Right cardiac atrium (tissue), 5 donors: ENCODE measurements at regions of chr17 and their contacts with region 1.

Region 1: GRCh38 chr17:58631523-58632323 is 60.1 kb downstream of the TEX14 start:
- DNase-seq: peak; percentile 94 to 97 (median 96)
- ATAC-seq: peak; percentile 98
- H3K4me3 ChIP-seq: peak overlapping the region; percentile 81
- H3K27ac ChIP-seq: peak overlapping the region; percentile 95
- H3K4me1 ChIP-seq: peaks cover 3% of the 10 kb centered on the region
- H3K27me3 ChIP-seq: no peaks in the 10 kb centered on the region

Region 2: DNA sequence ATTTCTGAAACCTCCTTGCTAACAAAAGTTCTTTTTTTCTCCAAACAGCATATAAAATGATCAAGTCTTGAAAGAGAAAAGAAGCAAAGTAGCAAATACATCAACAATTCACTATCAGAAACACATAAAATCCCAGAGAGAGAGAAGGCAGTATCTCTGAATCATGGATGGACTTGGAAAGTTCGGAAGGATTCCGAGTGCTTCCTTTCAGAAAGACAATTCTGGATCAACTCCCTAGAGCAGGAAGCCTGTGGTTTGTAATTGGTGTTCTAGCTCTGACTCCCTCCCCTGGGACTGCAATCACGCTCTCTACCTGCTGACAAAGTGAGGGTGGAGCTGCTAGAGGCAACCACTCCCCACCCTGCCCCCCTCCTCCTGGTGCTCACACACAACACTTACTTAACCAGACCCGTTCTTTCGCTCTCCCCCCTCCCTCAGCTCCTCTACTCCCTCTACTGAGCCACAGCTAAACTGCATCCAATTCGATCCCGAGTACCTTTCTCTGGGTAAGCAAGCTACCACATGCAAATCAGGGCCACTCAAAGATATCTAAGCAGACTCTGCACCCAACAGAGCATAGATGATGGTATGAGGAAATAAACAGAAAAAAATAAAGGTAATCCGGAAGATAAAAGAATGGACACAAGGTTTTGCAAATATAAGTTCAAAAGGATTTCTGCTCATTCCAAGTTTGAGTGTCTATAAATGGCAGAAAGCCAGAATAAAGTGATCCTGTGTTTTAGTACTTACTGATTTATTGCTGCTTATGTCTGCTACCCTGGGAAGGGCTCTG is 214.2 kb before region 1 on chr17 and contains the start of gene RNF43:
- intact Hi-C with region 1: no loop called
- DNase-seq: peak; percentile 80 to 92 (median 88)
- ATAC-seq: peak; percentile 99 to 100
- H3K4me3 ChIP-seq: peak within 1 kb of the TSS; percentile 36
- H3K27ac ChIP-seq: peak within 1 kb of the TSS; percentile 24
- H3K4me1 ChIP-seq: no peaks in the 10 kb centered on the region
- H3K27me3 ChIP-seq: no peaks in the 10 kb centered on the region
- total RNA-seq, gene RNF43: 2.0 to 8.1 (median 4.3) TPM

Region 3: DNA sequence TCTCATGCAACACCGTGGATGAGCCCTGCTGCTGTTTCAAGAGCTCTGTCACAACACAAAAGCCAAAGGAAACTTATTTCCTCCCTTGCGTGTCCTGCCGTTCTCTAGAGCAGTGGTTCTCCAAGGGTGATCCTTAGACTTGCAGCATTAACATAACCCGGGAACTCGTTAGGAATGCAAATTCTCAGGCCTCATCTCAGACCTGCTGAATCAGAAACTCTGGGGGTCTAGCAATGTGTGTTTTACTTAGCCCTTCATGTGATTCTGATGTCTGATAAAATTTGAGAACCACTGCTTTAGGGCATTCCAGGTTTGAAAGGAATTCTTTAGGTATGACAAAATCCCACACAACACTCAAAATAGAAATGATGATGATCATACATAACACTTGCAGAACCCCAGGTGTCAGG is 65.9 kb before region 1 on chr17:
- intact Hi-C with region 1: no loop called
- DNase-seq: no peak
- ATAC-seq: no peak
- H3K4me3 ChIP-seq: no peak overlapping the region
- H3K27ac ChIP-seq: no peak overlapping the region
- H3K4me1 ChIP-seq: no peaks in the 10 kb centered on the region
- H3K27me3 ChIP-seq: no peaks in the 10 kb centered on the region

Region 4: DNA sequence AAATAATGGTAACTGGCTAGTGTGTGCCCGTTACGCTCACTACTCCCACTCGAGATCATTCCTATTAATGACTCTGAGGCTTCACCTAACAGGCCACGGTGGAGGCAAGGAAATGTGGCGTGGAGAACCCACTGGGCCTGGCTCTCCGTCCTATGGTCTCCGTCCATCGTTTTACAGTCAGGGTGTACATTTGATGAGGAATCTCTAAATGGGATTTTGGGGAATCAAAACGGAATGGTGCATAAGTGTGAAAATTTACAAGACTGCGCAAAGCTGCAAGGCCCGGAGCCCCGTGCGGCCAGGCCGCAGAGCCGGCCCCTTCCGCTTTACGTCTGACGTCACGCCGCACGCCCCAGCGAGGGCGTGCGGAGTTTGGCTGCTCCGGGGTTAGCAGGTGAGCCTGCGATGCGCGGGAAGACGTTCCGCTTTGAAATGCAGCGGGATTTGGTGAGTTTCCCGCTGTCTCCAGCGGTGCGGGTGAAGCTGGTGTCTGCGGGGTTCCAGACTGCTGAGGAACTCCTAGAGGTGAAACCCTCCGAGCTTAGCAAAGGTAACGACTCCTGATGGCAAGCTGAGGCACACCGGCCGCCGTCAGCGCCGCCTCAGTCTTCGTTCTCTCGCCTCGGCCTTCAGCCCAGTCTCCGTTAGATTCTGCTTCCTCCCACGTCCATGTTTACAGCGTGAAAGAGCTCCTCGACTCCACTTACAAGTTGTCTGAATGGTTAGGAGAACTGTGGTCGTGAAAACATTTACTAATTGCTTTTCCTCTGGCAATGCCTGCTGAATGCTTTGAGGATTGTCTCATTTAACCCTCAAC is 60.7 kb after region 1 on chr17 and contains the start of gene RAD51C:
- intact Hi-C with region 1: loop called in 1 of 4 experiments (anchors 2 kb)
- DNase-seq: peak; percentile 89 to 95 (median 94)
- ATAC-seq: peak; percentile 100
- H3K4me3 ChIP-seq: peak within 1 kb of the TSS; percentile 62
- H3K27ac ChIP-seq: peak within 1 kb of the TSS; percentile 49
- H3K4me1 ChIP-seq: no peaks in the 10 kb centered on the region
- H3K27me3 ChIP-seq: no peaks in the 10 kb centered on the region
- total RNA-seq, gene RAD51C: 30.4 to 41.6 (median 36.9) TPM